ENCODE measurements at regions of chr6 and their contacts with region 1.

Region 1: GRCh38 chr6:70686548-70687133 is 19.0 kb downstream of the SMAP1 start:
- DNase-seq: no peak

Region 2: GRCh38 chr6:70520575-70520974 is 166.1 kb before region 1 on chr6:
- CTCF ChIA-PET with region 1: interaction called, 17 read pairs
- POLR2A ChIA-PET with region 1: no interaction called
- DNase-seq: peak; percentile 20

Region 3: DNA sequence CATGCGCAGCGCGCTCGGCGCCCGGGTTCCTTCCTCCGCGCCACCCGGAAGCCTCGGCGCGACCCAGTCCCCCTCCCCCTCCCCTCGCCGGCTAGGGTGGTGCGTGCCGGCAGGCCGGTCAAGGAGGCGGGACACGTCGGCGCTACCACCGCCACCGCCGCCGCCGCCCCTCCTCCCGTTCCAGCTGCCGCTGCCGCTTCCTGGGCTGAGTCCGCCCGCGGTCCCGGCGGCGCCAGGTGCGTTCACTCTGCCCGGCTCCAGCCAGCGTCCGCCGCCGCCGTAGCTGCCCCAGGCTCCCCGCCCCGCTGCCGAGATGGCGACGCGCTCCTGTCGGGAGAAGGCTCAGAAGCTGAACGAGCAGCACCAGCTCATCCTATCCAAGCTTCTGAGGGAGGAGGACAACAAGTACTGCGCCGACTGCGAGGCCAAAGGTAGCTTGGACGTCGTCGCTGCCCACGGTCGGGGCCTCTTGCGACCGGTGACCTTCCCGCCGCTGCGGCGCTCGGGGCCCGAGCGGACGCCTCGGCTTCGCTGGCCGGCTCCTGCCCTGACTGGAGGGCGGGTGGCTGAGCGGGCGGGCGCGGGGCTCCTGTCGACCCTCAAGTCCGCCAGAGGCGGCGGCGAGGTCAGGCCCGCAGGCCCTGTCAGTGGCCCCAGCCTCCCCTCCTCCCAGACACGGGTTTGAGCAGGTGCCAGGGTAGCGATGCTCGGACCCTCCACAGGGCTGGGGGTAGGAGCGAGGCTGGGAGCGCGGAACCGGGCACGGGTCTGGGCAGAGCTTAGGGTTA is 18.7 kb before region 1 on chr6 and contains the start of gene SMAP1:
- CTCF ChIA-PET with region 1: no interaction called
- POLR2A ChIA-PET with region 1: interaction called, 10 read pairs
- DNase-seq: peak; percentile 96

Region 4: DNA sequence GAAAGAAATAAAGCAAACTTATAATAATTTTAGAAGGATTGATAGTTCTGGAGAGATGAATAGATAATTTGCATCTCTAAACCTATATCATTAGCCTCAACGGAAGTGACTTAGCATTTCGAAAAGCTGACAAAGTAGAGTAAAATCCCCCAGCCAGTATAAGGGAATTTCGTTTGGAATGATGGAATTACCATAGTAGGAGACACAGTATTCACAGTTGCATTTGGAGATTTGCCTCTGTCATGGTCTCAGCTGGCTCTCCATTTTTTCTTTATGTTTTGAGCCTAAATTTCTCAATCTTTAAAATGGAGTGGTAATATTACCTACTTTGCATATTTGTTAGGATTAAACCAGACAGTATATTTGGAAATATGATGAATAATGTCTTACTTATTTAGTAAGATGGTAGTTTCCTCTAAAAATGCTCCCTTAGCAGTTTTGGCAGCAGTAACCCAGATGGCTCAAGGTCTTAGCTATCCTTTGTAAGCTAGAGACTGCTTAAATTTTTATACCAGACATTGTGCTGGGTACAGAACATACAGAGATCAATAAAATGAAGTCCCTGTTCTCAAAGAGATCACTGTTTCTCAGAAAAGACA is 39.3 kb after region 1 on chr6:
- CTCF ChIA-PET with region 1: no interaction called
- POLR2A ChIA-PET with region 1: no interaction called
- DNase-seq: no peak

Region 5: DNA sequence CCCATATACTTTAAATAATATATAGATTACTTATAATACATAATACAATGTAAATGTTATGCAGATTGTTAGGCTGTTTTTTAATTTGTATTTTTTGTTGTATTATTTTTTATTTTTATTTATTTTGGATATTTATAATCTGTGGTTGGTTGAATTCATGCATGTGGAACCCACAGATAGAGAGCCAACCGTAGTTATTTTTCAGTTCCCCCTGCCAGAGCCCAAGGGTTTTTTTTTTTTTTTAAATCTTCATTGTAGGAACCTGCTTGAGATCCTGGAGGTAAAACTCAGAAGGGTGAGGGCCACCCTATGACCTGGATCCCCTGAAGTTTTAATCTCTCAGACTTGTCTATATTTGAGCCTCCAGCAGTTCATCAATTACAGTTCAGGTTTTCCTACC is 137.0 kb after region 1 on chr6:
- CTCF ChIA-PET with region 1: no interaction called
- POLR2A ChIA-PET with region 1: no interaction called
- DNase-seq: no peak

Measured in HEK293T (cell line).